ENCODE measurements at regions of chr10 and their contacts with region 1.

Region 1: GRCh38 chr10:84511709-84512285 is 183.4 kb downstream of the CCSER2 start:
- DNase-seq: no peak
- ATAC-seq: no peak
- H3K4me3 ChIP-seq: no peak overlapping the region
- H3K4me3 Mint-ChIP-seq: no peak overlapping the region
- H3K27ac ChIP-seq: no peak overlapping the region
- H3K27ac Mint-ChIP-seq: peak overlapping the region in 2 of 9 donors; percentile 32 to 87
- H3K4me1 ChIP-seq: no peaks in the 10 kb centered on the region
- H3K4me1 Mint-ChIP-seq: peaks cover 0 to 7% (median 0%) of the 10 kb centered on the region in 7 donors
- H3K27me3 ChIP-seq: no peaks in the 10 kb centered on the region
- H3K27me3 Mint-ChIP-seq: no peaks in the 10 kb centered on the region

Region 2: GRCh38 chr10:84499846-84500245 is 12.0 kb before region 1 on chr10:
- CTCF ChIA-PET with region 1: no interaction called
- POLR2A ChIA-PET with region 1: no interaction called
- intact Hi-C with region 1: loop called in 1 of 2 experiments (anchors 2 kb)
- DNase-seq: no peak
- ATAC-seq: no peak
- H3K4me3 ChIP-seq: no peak overlapping the region
- H3K4me3 Mint-ChIP-seq: no peak overlapping the region
- H3K27ac ChIP-seq: no peak overlapping the region
- H3K27ac Mint-ChIP-seq: peak overlapping the region in 6 of 9 donors; percentile 1 to 63 (median 40)
- H3K4me1 ChIP-seq: no peaks in the 10 kb centered on the region
- H3K4me1 Mint-ChIP-seq: peaks cover 11 to 32% (median 30%) of the 10 kb centered on the region in 7 donors
- H3K27me3 ChIP-seq: no peaks in the 10 kb centered on the region
- H3K27me3 Mint-ChIP-seq: no peaks in the 10 kb centered on the region

Measured in naive thymus-derived CD4-positive, alpha-beta T cell (primary cell).